ENCODE measurements at regions of chr9 and their contacts with region 1.

Region 1: GRCh38 chr9:385818-386398 is 171.2 kb downstream of the DOCK8 start:
- DNase-seq: peak; percentile 74
- H3K4me3 ChIP-seq: no peak overlapping the region
- H3K27ac ChIP-seq: no peak overlapping the region
- H3K4me1 ChIP-seq: no peaks in the 10 kb centered on the region
- H3K27me3 ChIP-seq: peaks cover 9% of the 10 kb centered on the region

Region 2: DNA sequence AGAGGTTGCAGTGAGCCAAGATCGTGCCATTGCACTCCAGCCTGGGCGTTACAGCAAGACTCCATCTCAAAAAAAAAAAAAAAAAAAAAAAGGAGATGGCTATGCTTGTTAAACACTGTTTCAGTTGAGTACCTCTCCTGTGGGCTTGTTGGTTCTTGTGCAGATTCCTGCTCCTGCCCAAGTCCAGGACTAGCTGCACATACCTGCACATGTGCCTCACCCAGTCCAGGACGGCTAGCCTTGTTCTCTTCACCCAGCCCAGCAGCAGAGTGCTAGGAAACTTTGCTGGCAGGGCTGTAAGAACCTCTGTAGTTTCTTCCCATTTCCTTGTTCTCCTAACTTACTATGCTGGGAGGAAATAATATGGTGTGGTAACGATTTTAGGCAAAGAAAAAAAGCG is 221.5 kb after region 1 on chr9:
- in situ Hi-C with region 1: loop called (anchors 10 kb)
- DNase-seq: no peak
- H3K4me3 ChIP-seq: no peak overlapping the region
- H3K27ac ChIP-seq: no peak overlapping the region
- H3K4me1 ChIP-seq: no peaks in the 10 kb centered on the region
- H3K27me3 ChIP-seq: no peaks in the 10 kb centered on the region; the same call in 1 of the 2 replicates